ENCODE measurements at regions of chr7 and their contacts with region 1.

Region 1: DNA sequence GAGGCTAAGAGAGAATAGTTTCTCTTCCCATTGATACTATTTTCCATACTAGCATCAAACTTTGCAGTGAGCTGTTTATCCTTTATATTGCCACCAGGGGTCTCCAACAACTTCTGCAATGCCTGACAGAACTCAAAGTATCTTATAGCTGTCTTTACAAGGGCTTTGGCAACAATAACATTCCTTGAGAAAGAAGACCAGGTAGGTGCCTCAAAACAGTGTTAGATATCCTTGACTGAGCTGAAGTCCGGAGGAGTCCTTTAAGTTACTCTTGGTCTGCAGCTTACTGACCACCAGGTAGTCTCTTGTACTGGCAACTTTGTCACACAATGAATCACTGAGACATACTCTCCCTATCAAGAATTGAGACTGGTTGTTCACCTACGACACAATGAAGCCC is 30.0 kb upstream of the TES start:
- DNase-seq: peak; percentile 20
- H3K4me3 Mint-ChIP-seq: no peak overlapping the region
- H3K27ac Mint-ChIP-seq: no peak overlapping the region
- H3K4me1 Mint-ChIP-seq: no peaks in the 10 kb centered on the region
- H3K27me3 Mint-ChIP-seq: no peaks in the 10 kb centered on the region

Region 2: DNA sequence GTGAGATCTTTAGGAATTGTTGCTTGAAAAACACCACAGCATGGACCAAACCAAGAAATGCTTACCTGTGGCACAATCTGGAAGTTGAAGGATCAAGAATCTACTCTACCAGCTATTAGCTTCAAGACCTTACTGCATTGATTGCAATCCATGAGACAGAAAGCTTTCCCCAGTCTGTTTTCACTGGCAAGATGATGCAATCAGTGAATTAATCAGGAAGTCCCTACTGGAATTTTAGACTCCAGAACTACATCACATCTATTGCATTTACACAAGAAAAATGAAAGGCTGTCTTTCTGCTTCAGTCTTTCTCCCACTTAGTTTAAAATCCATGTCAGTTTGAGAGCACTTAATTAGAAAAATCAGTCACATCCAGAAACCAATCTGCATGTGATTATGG is 341.5 kb before region 1 on chr7:
- CTCF ChIA-PET with region 1: no interaction called
- intact Hi-C with region 1: no loop called
- DNase-seq: no peak
- H3K4me3 Mint-ChIP-seq: no peak overlapping the region
- H3K27ac Mint-ChIP-seq: no peak overlapping the region
- H3K4me1 Mint-ChIP-seq: no peaks in the 10 kb centered on the region
- H3K27me3 Mint-ChIP-seq: no peaks in the 10 kb centered on the region

Region 3: DNA sequence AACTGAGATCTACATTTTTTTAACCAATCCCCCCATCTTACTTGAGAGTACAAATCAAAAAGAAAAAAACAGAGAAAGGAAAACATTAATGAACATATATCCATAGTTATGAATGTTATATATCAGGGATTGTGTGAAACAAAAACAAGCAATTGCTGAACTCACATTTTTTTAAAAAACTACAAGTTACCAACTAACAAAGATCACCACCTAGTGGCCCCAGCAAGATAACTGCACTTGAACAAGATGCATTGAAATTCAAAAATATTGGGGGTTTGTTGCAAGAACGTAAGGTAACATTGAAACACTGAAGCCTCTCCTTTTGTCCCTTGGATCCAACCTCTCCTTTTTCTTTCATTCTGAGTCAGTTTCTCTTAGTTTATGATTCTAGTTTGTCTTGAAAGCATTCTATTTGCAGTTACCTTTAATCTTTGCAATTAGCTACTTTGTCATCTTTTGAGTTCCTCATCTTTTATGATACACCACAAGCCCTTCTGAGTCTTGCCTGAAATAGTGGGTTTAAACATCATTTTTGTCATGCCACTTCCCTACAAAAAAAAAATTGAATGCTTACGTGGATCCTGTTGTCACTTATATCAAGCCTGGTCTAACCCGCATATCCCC is 57.2 kb before region 1 on chr7:
- CTCF ChIA-PET with region 1: no interaction called
- intact Hi-C with region 1: no loop called
- DNase-seq: peak; percentile 6
- H3K4me3 Mint-ChIP-seq: no peak overlapping the region
- H3K27ac Mint-ChIP-seq: no peak overlapping the region
- H3K4me1 Mint-ChIP-seq: no peaks in the 10 kb centered on the region
- H3K27me3 Mint-ChIP-seq: peaks cover 14% of the 10 kb centered on the region

Region 4: GRCh38 chr7:116197360-116197759 is 17.1 kb after region 1 on chr7:
- CTCF ChIA-PET with region 1: interaction called, 10 read pairs
- intact Hi-C with region 1: no loop called
- DNase-seq: no peak
- H3K4me3 Mint-ChIP-seq: no peak overlapping the region
- H3K27ac Mint-ChIP-seq: no peak overlapping the region
- H3K4me1 Mint-ChIP-seq: no peaks in the 10 kb centered on the region
- H3K27me3 Mint-ChIP-seq: no peaks in the 10 kb centered on the region

Region 5: GRCh38 chr7:116206141-116206540 is 25.8 kb after region 1 on chr7:
- CTCF ChIA-PET with region 1: interaction called, 17 read pairs
- intact Hi-C with region 1: loop called (anchors 2 kb)
- DNase-seq: no peak
- H3K4me3 Mint-ChIP-seq: no peak overlapping the region
- H3K27ac Mint-ChIP-seq: no peak overlapping the region
- H3K4me1 Mint-ChIP-seq: peaks cover 12% of the 10 kb centered on the region
- H3K27me3 Mint-ChIP-seq: no peaks in the 10 kb centered on the region

Region 6: DNA sequence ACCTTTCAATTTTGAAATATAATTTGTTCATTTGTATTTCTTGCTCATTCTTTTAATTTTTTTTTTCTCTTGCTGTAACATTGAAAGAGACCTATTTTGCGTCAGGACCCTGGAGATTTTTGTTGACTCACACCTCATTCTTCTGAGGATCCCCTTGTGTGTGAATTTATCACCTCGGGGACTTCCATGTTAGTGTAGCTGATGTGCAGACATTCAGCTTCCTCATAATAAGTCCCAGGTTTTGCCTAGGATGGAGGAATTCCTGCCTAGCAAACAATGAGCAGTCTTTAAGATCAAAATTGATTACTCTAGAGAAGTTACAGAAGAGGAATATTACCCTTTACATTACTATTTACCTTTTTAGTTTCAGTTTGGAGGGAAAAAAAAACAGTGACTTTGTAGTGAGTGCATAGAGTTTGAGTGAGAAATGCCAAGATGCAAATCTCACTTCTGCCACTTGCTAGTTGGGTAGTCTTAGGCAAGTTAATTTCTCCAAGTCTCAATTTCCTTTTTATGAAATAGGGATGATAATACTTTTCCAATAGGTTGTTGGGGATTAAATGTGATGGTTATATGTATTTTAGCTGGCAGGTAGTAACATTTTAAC is 44.3 kb after region 1 on chr7:
- CTCF ChIA-PET with region 1: interaction called, 20 read pairs
- intact Hi-C with region 1: no loop called
- DNase-seq: no peak
- H3K4me3 Mint-ChIP-seq: peak overlapping the region; percentile 41
- H3K27ac Mint-ChIP-seq: peak overlapping the region; percentile 58
- H3K4me1 Mint-ChIP-seq: peaks cover 81% of the 10 kb centered on the region
- H3K27me3 Mint-ChIP-seq: no peaks in the 10 kb centered on the region

Region 7: DNA sequence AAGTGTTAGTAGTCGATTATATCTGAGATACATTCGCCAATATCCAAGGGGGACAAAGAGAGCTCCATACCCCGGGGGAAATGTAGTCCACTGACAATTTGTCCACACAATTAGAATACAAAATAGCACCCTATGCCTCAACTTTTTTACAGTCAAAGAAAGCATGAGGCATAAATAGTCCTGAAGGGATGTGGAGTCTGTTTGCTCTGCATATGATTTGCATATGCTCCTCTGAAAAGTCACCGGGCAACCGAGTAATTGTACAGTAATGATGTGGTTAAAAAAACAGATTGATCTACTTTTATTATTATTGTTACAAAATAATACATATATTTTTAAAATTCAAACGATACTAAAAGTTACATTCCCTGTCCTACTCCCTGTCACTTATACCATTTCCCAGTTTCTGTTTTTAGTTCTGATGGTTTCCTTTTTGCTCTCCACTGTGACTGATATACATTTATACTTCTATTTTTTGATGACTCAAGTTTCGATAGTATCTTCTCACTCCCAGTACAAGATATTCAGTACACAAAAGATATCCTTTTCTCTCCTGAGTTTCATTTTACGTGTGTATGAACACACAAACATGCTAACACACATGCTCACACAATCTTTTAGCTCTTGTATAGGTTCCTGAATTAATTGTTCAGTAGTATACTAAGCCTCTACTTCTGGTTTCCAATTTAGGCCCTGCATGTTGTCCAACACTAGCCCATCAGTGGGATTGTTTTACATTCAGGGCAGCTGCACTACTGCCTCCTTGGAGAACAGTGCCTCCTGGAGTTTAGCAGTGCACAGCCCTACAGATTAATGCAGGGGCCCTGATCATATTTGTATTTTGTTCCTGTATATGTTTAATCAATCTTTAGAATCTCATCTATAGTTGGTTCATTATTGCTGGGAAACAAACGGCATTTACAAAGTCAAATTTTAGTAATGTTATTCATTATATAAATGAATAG is 160.9 kb after region 1 on chr7:
- CTCF ChIA-PET with region 1: no interaction called
- intact Hi-C with region 1: loop called (anchors 5 kb)
- DNase-seq: no peak
- H3K4me3 Mint-ChIP-seq: no peak overlapping the region
- H3K27ac Mint-ChIP-seq: no peak overlapping the region
- H3K4me1 Mint-ChIP-seq: no peaks in the 10 kb centered on the region
- H3K27me3 Mint-ChIP-seq: peaks cover 4% of the 10 kb centered on the region

Region 8: GRCh38 chr7:116525913-116526861 is 345.9 kb after region 1 on chr7:
- CTCF ChIA-PET with region 1: interaction called, 3 read pairs
- intact Hi-C with region 1: loop called (anchors 1 kb)
- DNase-seq: peak; percentile 65
- H3K4me3 Mint-ChIP-seq: peak overlapping the region; percentile 85
- H3K27ac Mint-ChIP-seq: no peak overlapping the region
- H3K4me1 Mint-ChIP-seq: peaks cover 19% of the 10 kb centered on the region
- H3K27me3 Mint-ChIP-seq: peaks cover 62% of the 10 kb centered on the region